ENCODE measurements at regions of chr6 and their contacts with region 1.

Region 1: DNA sequence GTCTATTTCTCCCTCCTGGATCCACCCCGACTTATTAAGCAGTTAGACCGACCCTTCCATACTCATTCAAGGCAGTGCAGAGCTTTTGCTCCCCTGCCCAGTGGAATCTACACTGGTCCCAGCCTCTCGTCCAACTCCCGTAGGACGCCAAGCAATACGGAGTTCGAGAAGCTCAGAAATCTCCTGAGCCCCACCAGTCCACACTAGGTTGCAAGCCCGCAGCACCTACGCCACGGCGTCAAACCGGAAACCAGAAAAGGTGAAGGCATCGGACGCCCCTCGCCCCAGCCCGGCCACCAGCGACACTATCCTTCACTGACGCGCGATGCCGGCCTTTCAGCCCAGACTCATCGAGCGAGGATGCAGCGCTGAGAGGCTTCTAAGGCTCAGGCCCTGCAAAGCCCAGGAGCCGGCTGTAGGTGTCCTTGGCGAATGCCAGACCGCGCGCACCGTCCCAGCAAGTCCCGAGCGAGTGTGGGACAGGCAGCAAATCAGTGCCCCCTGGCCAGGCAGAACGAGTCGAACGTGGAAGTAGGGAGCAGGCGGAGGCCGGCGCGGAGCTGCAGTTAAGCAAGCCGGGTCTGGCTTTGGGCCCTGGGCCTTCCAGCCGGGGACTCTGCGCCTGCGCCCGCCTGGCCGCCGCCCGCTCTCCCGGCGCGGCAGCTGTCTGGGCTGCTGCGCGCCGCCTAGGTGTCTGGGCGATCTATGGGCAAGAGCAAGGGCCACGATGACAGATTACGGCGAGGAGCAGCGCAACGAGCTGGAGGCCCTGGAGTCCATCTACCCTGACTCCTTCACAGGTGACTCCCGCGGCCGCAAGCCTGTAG is at the start of gene RWDD1:
- DNase-seq: peak; percentile 99
- ATAC-seq: peak; percentile 96
- H3K4me3 Mint-ChIP-seq: peak within 1 kb of the TSS; percentile 98
- H3K27ac Mint-ChIP-seq: peak within 1 kb of the TSS; percentile 97
- H3K4me1 Mint-ChIP-seq: peaks cover 37% of the 10 kb centered on the region
- H3K27me3 Mint-ChIP-seq: peaks cover 5% of the 10 kb centered on the region
- total RNA-seq, gene RWDD1: 39.8 to 45.2 TPM

Region 2: DNA sequence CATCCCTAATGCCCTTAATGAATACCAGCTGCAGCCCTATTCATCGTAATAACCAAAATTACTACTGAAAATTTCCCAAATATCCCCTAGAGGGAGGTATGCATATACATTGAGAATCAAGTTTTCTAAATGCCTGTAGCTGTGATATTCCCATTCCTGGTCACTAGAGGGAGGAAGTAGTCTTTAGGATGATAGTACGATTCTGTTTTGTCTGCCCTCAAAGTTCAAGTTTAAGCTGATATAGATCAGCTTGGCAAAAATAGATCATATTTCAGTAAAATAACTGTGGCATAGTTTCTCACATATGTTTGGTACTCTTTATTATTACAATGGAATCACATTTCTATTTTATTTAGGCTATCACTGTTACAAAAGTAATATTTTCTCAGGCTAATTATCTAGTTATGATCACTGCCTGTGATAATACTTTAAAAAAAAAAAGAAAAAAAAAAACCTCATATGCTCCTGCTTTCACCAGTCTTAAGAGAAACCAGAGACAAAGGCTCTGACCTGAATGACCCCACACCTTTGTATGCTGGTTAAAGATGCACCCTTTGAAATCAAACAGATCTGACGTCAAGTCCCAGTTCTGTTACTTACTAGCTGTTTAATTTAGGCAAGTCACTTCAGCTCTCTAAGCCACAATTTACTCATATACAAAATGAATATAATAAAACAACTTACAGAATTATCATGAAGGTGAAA is 302.3 kb before region 1 on chr6:
- CTCF ChIA-PET with region 1: interaction called, 11 read pairs
- POLR2A ChIA-PET with region 1: no interaction called
- DNase-seq: no peak
- ATAC-seq: peak; percentile 66
- H3K4me3 Mint-ChIP-seq: no peak overlapping the region
- H3K27ac Mint-ChIP-seq: no peak overlapping the region
- H3K4me1 Mint-ChIP-seq: peaks cover 3% of the 10 kb centered on the region
- H3K27me3 Mint-ChIP-seq: no peaks in the 10 kb centered on the region

Region 3: DNA sequence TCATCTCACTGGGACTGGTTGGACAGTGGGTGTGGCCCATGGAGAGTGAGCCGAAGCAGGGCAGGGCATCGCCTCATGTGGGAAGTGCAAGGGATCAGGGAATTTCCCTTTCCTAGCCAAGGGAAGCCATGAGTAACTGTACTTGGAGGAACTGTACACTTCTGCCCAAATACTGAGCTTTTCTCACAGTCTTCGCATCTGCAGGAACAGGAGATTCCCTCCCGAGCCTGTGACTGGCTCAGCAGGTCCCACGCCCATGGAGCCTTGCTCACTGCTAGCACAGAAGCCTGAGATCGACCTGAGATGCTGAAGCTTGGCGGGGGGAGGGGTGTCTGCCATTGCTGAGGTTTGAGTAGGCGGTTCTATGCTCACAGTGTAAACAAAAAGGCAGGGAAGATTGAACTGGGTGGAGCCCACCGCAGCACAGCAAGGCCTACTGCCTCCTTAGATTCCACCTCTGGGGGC is 70.1 kb before region 1 on chr6:
- CTCF ChIA-PET with region 1: no interaction called
- POLR2A ChIA-PET with region 1: no interaction called
- DNase-seq: no peak
- ATAC-seq: no peak
- H3K4me3 Mint-ChIP-seq: no peak overlapping the region
- H3K27ac Mint-ChIP-seq: no peak overlapping the region
- H3K4me1 Mint-ChIP-seq: no peaks in the 10 kb centered on the region
- H3K27me3 Mint-ChIP-seq: peaks cover 32% of the 10 kb centered on the region